ENCODE measurements at regions of chr18 and their contacts with region 1.

Region 1: GRCh38 chr18:27605107-27605834 is 420.2 kb upstream of the CHST9 start:
- DNase-seq: peak; percentile 63
- H3K4me3 ChIP-seq: no peak overlapping the region; a peak in 1 of 4 replicates
- H3K27ac ChIP-seq: peak overlapping the region in 1 of 2 experiments; percentile 58; a peak in 2 of 4 replicates
- H3K4me1 ChIP-seq: peaks cover 0 to 7% of the 10 kb centered on the region in 2 experiments; a peak in 2 of 4 replicates
- H3K27me3 ChIP-seq: no peaks in the 10 kb centered on the region
- CTCF ChIP-seq: peak; percentile 87
- EP300 ChIP-seq: peak in 1 of 2 experiments; percentile 98; a peak in 2 of 4 replicates
- RAD21 ChIP-seq: peak; percentile 94

Region 2: GRCh38 chr18:27363872-27364271 is 241.4 kb before region 1 on chr18:
- CTCF ChIA-PET with region 1: interaction called, 24 read pairs
- POLR2A ChIA-PET with region 1: no interaction called
- DNase-seq: peak; percentile 16
- H3K4me3 ChIP-seq: no peak overlapping the region
- H3K27ac ChIP-seq: no peak overlapping the region
- H3K4me1 ChIP-seq: no peaks in the 10 kb centered on the region
- H3K27me3 ChIP-seq: no peaks in the 10 kb centered on the region
- CTCF ChIP-seq: peak; percentile 60
- EP300 ChIP-seq: no peak
- RAD21 ChIP-seq: peak; percentile 67

Region 3: DNA sequence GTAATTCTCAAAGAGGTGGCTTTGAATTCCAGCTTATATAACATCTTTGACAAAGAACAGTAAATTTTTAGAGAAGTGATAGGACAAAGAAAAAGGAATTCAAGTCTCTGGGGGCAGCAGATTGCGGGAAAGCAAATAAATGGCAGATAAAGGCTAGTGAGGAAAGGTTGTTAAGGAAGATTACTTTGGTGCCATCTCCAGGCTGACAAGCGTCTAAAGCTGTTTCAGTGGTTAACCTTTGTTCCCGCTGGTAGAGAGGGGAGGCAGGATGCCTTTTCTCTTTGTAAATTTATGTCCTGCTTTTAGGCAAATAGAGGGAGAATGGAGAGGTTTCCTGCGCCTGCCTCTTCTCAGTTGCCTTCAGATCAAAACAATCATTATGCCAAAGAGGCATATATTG is 11.1 kb after region 1 on chr18:
- CTCF ChIA-PET with region 1: interaction called, 20 read pairs
- POLR2A ChIA-PET with region 1: no interaction called
- DNase-seq: no peak
- H3K4me3 ChIP-seq: no peak overlapping the region
- H3K27ac ChIP-seq: no peak overlapping the region
- H3K4me1 ChIP-seq: no peaks in the 10 kb centered on the region
- H3K27me3 ChIP-seq: no peaks in the 10 kb centered on the region
- CTCF ChIP-seq: no peak
- EP300 ChIP-seq: no peak
- RAD21 ChIP-seq: no peak

Region 4: GRCh38 chr18:27750014-27750413 is 144.7 kb after region 1 on chr18:
- CTCF ChIA-PET with region 1: interaction called, 10 read pairs
- POLR2A ChIA-PET with region 1: no interaction called
- DNase-seq: peak; percentile 34
- H3K4me3 ChIP-seq: no peak overlapping the region; a peak in 1 of 4 replicates
- H3K27ac ChIP-seq: no peak overlapping the region
- H3K4me1 ChIP-seq: no peaks in the 10 kb centered on the region; a peak in 1 of 4 replicates
- H3K27me3 ChIP-seq: no peaks in the 10 kb centered on the region
- CTCF ChIP-seq: peak; percentile 70
- EP300 ChIP-seq: no peak
- RAD21 ChIP-seq: peak; percentile 67

Region 5: GRCh38 chr18:28176933-28177827 is 571.9 kb after region 1 on chr18 and contains the start of gene CDH2:
- CTCF ChIA-PET with region 1: interaction called, 12 read pairs
- POLR2A ChIA-PET with region 1: interaction called, 4 read pairs
- DNase-seq: peak; percentile 92
- H3K4me3 ChIP-seq: peak within 1 kb of the TSS; percentile 87 to 90
- H3K27ac ChIP-seq: peak within 1 kb of the TSS; percentile 89 to 94
- H3K4me1 ChIP-seq: peaks cover 4 to 5% of the 10 kb centered on the region in 2 experiments; a peak in 2 of 4 replicates
- H3K27me3 ChIP-seq: no peaks in the 10 kb centered on the region
- CTCF ChIP-seq: peak; percentile 37
- EP300 ChIP-seq: peak in 1 of 2 experiments; percentile 13; a peak in 1 of 4 replicates
- RAD21 ChIP-seq: peak; percentile 3; the same call in 1 of the 2 replicates
- polyA plus RNA-seq, gene CDH2: 146 and 186 TPM in 2 replicates

Measured in SK-N-SH (cell line).